MCF 10A (cell line): ENCODE measurements at regions of chr22 and their contacts with region 1.

Region 1: GRCh38 chr22:43014869-43015676 is at the start of gene PACSIN2:
- DNase-seq: peak; percentile 99
- H3K4me3 Mint-ChIP-seq: peak within 1 kb of the TSS; percentile 93
- H3K27ac Mint-ChIP-seq: peak within 1 kb of the TSS; percentile 92
- H3K4me1 Mint-ChIP-seq: peaks cover 23% of the 10 kb centered on the region
- H3K27me3 Mint-ChIP-seq: no peaks in the 10 kb centered on the region
- CTCF ChIP-seq: no peak
- total RNA-seq, gene PACSIN2: 66.5 and 67.3 TPM in 2 replicates

Region 2: GRCh38 chr22:42933481-42934091 is 81.5 kb before region 1 on chr22:
- CTCF ChIA-PET with region 1: interaction called, 3 read pairs
- POLR2A ChIA-PET with region 1: interaction called, 12 read pairs
- intact Hi-C with region 1: no loop called
- DNase-seq: peak; percentile 78
- H3K4me3 Mint-ChIP-seq: peak overlapping the region; percentile 61
- H3K27ac Mint-ChIP-seq: peak overlapping the region; percentile 99
- H3K4me1 Mint-ChIP-seq: peaks cover 80% of the 10 kb centered on the region
- H3K27me3 Mint-ChIP-seq: no peaks in the 10 kb centered on the region
- CTCF ChIP-seq: no peak

Region 3: DNA sequence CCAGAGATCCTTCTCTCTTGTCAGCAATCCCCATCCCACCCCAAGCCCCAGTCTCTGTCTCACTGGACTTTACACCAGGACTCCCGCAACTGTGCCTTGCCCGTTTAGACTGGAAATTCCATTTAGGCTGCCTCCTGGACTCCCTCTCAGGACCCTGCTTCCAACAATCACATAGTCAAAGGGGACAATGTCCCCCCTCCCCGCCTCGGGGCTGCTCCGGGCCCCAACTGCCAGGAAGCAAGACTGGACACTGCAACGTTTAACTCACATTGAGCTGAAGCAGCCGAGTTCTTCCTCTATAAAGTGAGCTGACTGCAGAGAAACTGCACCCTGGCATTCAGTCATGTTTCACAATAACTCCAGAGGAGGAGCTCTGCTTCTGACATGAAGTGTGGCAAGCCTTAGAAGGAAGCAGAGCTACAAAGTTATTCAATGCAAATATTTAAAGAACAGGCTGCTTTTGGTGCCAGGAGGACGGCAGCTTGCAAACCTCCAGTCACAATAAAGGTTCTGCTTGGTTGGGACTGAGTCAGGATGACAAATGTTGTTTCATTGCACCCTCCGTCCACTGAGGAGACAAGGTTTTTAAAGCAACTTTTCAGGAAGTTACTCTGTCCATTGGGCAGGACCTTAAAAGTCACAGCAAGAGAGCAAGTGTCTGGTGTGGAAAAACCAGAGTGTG is 20.1 kb before region 1 on chr22:
- CTCF ChIA-PET with region 1: interaction called, 4 read pairs
- POLR2A ChIA-PET with region 1: interaction called, 85 read pairs
- intact Hi-C with region 1: loop called (anchors 2 kb)
- DNase-seq: peak; percentile 93
- H3K4me3 Mint-ChIP-seq: peak overlapping the region; percentile 73
- H3K27ac Mint-ChIP-seq: peak overlapping the region; percentile 98
- H3K4me1 Mint-ChIP-seq: peaks cover 41% of the 10 kb centered on the region
- H3K27me3 Mint-ChIP-seq: no peaks in the 10 kb centered on the region
- CTCF ChIP-seq: no peak

Region 4: GRCh38 chr22:43001271-43002201 is 13.5 kb before region 1 on chr22:
- CTCF ChIA-PET with region 1: interaction called, 5 read pairs
- POLR2A ChIA-PET with region 1: interaction called, 85 read pairs
- intact Hi-C with region 1: no loop called
- DNase-seq: no peak
- H3K4me3 Mint-ChIP-seq: no peak overlapping the region
- H3K27ac Mint-ChIP-seq: peak overlapping the region; percentile 52
- H3K4me1 Mint-ChIP-seq: peaks cover 39% of the 10 kb centered on the region
- H3K27me3 Mint-ChIP-seq: no peaks in the 10 kb centered on the region
- CTCF ChIP-seq: no peak

Region 5: GRCh38 chr22:43080616-43081015 is 65.5 kb after region 1 on chr22:
- CTCF ChIA-PET with region 1: interaction called, 3 read pairs
- POLR2A ChIA-PET with region 1: interaction called, 21 read pairs
- intact Hi-C with region 1: no loop called
- DNase-seq: peak; percentile 65
- H3K4me3 Mint-ChIP-seq: peak overlapping the region; percentile 12
- H3K27ac Mint-ChIP-seq: peak overlapping the region; percentile 9
- H3K4me1 Mint-ChIP-seq: peaks cover 7% of the 10 kb centered on the region
- H3K27me3 Mint-ChIP-seq: no peaks in the 10 kb centered on the region
- CTCF ChIP-seq: no peak

Region 6: DNA sequence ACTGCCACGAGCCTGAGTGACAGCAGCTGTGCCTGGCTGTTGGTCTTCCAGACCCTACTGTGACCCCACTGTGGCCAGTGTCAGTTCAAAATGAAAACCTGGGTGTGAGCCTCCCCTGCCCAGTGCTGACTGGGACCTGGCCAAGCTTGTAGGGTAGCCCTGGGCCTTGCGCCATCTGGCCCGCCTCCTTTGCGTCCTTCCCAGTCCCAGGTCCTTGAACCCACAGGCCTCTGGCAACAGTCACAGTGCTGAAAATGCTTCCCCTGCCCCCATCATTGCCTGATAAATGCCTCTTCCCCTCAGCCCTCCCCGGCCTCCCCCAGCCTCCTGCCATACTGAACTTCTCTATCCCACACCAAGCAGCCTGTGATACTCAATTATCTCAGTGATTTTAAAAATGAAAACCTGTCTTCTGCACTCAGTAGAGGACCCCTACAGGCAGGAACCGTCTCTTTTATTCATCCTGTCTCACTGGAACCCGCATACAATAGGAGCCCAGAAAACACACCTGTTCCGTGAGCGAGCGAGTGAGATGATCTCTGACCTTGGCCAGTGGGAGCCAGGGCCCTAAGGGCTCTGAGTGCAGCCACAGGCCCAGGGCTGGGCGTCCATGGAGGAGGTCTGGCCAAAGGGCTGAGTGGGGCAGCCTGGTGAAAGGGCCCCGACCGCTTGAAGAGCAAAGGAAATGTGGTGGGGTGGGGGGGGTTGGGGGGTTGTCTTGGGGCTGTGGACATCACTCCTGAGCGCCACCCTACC is 221.5 kb after region 1 on chr22:
- CTCF ChIA-PET with region 1: no interaction called
- POLR2A ChIA-PET with region 1: no interaction called
- intact Hi-C with region 1: no loop called
- DNase-seq: no peak
- H3K4me3 Mint-ChIP-seq: no peak overlapping the region
- H3K27ac Mint-ChIP-seq: no peak overlapping the region
- H3K4me1 Mint-ChIP-seq: no peaks in the 10 kb centered on the region
- H3K27me3 Mint-ChIP-seq: peaks cover 62% of the 10 kb centered on the region
- CTCF ChIP-seq: no peak